ENCODE measurements at regions of chr20 and their contacts with region 1.

Region 1: GRCh38 chr20:21125849-21126580 is at the start of gene KIZ:
- DNase-seq: peak; percentile 92
- ATAC-seq: peak; percentile 99
- H3K4me3 ChIP-seq: peak within 1 kb of the TSS; percentile 65
- H3K27ac ChIP-seq: peak within 1 kb of the TSS; percentile 65
- H3K4me1 ChIP-seq: no peaks in the 10 kb centered on the region
- H3K27me3 ChIP-seq: no peaks in the 10 kb centered on the region
- CTCF ChIP-seq: peak; percentile 32; the same call in 1 of the 2 replicates
- POLR2A ChIP-seq: peak; percentile 90
- RAD21 ChIP-seq: 0 out of 2 replicates have a peak, but pooled peaks have one; percentile 18
- total RNA-seq, gene KIZ: 14.0 and 15.6 TPM in 2 replicates

Region 2: GRCh38 chr20:20786428-20786827 is 339.6 kb before region 1 on chr20:
- CTCF ChIA-PET with region 1: no interaction called
- POLR2A ChIA-PET with region 1: no interaction called
- dilution Hi-C with region 1: no loop called
- in situ Hi-C with region 1: no loop called
- intact Hi-C with region 1: no loop called
- DNase-seq: no peak
- ATAC-seq: no peak
- H3K4me3 ChIP-seq: no peak overlapping the region
- H3K27ac ChIP-seq: no peak overlapping the region
- H3K4me1 ChIP-seq: no peaks in the 10 kb centered on the region
- H3K27me3 ChIP-seq: no peaks in the 10 kb centered on the region
- CTCF ChIP-seq: no peak
- POLR2A ChIP-seq: no peak
- RAD21 ChIP-seq: no peak

Region 3: GRCh38 chr20:20860078-20860806 is 265.8 kb before region 1 on chr20:
- CTCF ChIA-PET with region 1: interaction called, 4 read pairs
- POLR2A ChIA-PET with region 1: no interaction called
- dilution Hi-C with region 1: no loop called
- in situ Hi-C with region 1: no loop called
- intact Hi-C with region 1: loop called (anchors 10 kb)
- DNase-seq: peak; percentile 74
- ATAC-seq: peak; percentile 96
- H3K4me3 ChIP-seq: no peak overlapping the region
- H3K27ac ChIP-seq: no peak overlapping the region
- H3K4me1 ChIP-seq: no peaks in the 10 kb centered on the region
- H3K27me3 ChIP-seq: no peaks in the 10 kb centered on the region
- CTCF ChIP-seq: peak; percentile 89
- POLR2A ChIP-seq: no peak
- RAD21 ChIP-seq: peak; percentile 73

Region 4: GRCh38 chr20:21182832-21183563 is 57.0 kb after region 1 on chr20:
- CTCF ChIA-PET with region 1: no interaction called
- POLR2A ChIA-PET with region 1: no interaction called
- dilution Hi-C with region 1: no loop called
- in situ Hi-C with region 1: no loop called
- intact Hi-C with region 1: loop called (anchors 5 kb)
- DNase-seq: peak; percentile 88
- ATAC-seq: peak; percentile 94
- H3K4me3 ChIP-seq: no peak overlapping the region
- H3K27ac ChIP-seq: no peak overlapping the region; the same call in 1 of the 2 replicates
- H3K4me1 ChIP-seq: peaks cover 9% of the 10 kb centered on the region
- H3K27me3 ChIP-seq: no peaks in the 10 kb centered on the region
- CTCF ChIP-seq: no peak
- POLR2A ChIP-seq: no peak
- RAD21 ChIP-seq: no peak

Region 5: DNA sequence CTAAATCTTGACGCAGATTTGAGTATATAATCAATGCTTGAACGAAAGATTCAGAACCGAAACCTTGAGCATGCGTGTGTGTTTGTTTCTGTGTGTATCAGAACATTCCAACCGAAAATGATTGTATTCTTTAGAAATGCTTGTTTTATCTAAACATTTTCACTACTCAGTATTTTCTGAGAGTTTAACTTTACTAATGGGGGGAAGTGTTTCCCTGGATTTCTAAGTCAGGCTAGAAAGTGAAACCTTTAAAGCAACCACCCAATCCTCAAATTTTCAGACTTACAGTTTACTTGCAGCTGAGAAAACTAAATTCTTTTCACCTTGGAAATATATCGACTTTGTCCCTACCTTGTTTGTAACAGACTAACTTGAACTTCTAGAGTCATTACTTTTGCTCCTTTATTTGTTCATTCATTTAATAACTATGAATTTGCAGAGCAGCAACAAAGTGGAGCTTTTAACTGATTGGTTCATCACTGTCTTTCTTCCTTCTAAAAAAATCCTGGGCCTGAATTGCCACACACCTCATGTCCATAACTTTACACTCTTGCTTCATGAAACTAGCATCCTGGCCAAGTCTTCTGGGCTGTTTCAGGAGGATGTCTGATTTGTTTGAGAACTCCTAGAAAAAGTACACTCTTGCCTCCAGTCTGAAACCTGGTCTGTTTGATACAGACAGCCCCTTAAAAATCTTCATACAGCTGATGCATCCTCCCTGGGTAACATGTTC is 99.4 kb after region 1 on chr20:
- CTCF ChIA-PET with region 1: no interaction called
- POLR2A ChIA-PET with region 1: no interaction called
- dilution Hi-C with region 1: no loop called
- in situ Hi-C with region 1: no loop called
- intact Hi-C with region 1: loop called (anchors 2 kb)
- DNase-seq: peak; percentile 44
- ATAC-seq: peak; percentile 86
- H3K4me3 ChIP-seq: peak overlapping the region; percentile 34; the same call in 1 of the 2 replicates
- H3K27ac ChIP-seq: peak overlapping the region; percentile 20; the same call in 1 of the 2 replicates
- H3K4me1 ChIP-seq: peaks cover 7% of the 10 kb centered on the region
- H3K27me3 ChIP-seq: no peaks in the 10 kb centered on the region
- CTCF ChIP-seq: no peak
- POLR2A ChIP-seq: no peak
- RAD21 ChIP-seq: no peak

Region 6: GRCh38 chr20:21303061-21303871 is 177.3 kb after region 1 on chr20 and contains the start of gene XRN2:
- CTCF ChIA-PET with region 1: no interaction called
- POLR2A ChIA-PET with region 1: no interaction called
- dilution Hi-C with region 1: no loop called
- in situ Hi-C with region 1: no loop called
- intact Hi-C with region 1: loop called (anchors 10 kb)
- DNase-seq: peak; percentile 93
- ATAC-seq: peak; percentile 91
- H3K4me3 ChIP-seq: peak within 1 kb of the TSS; percentile 81
- H3K27ac ChIP-seq: peak within 1 kb of the TSS; percentile 93
- H3K4me1 ChIP-seq: peaks cover 3% of the 10 kb centered on the region
- H3K27me3 ChIP-seq: no peaks in the 10 kb centered on the region
- CTCF ChIP-seq: 0 out of 2 replicates have a peak, but pooled peaks have one; percentile 21
- POLR2A ChIP-seq: peak; percentile 85
- RAD21 ChIP-seq: no peak
- total RNA-seq, gene XRN2: 70.8 and 99.2 TPM in 2 replicates

Measured in IMR-90 (cell line).